GM12878 (cell line): ENCODE measurements at regions of chr1 and their contacts with region 1.

Region 1: DNA sequence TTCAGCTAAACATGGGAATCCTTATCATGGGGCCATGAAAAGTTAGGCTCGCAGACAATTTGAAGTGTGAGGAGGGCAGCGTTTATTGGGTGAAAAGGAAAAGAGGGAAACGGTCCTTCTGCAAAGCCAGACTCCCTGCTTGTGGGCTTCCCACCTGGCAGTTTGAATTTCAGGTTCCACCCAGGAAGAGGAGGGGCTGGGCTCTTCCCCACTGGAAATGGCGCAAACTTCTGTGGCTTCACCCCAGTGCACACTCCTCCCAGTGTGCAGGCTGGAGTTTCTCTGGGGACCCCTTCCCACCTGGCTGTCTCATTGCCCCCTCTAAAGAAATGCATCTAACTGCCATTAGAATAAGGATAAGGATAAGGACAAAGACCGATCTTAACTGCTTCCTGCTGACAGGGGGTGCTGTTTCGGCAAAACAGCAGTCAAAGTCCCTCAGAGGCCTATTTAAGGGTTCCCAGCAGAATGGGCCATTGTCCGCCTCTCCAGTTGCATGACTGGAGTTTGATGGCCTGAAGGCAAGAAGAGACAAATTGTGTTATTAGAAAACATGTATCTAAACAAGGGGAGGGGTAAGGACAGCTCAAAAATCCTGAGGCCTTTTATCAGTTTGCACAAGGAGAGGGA is 20.4 kb downstream of the AIM2 start:
- DNase-seq: no peak
- ATAC-seq: peak; percentile 53
- H3K4me3 ChIP-seq: no peak overlapping the region
- H3K27ac ChIP-seq: no peak overlapping the region
- H3K4me1 ChIP-seq: no peaks in the 10 kb centered on the region
- H3K27me3 ChIP-seq: no peaks in the 10 kb centered on the region
- CTCF ChIP-seq: peak in 2 of 3 experiments; percentile 22 to 29; a peak in 1 of 6 replicates
- EP300 ChIP-seq: no peak
- POLR2A ChIP-seq: 0 out of 2 replicates have a peak, but pooled peaks have one; percentile 18
- RAD21 ChIP-seq: no peak

Region 2: GRCh38 chr1:159015440-159015909 is 40.7 kb before region 1 on chr1:
- CTCF ChIA-PET with region 1: no interaction called
- POLR2A ChIA-PET with region 1: no interaction called
- RAD21 ChIA-PET with region 1: no interaction called
- SMC1A ChIA-PET with region 1: interaction called, 4 read pairs
- in situ Hi-C with region 1: loop called (anchors 5 kb)
- intact Hi-C with region 1: loop called (anchors 5 kb)
- DNase-seq: peak; percentile 84
- ATAC-seq: peak; percentile 83
- H3K4me3 ChIP-seq: peak overlapping the region; percentile 64
- H3K27ac ChIP-seq: peak overlapping the region; percentile 100
- H3K4me1 ChIP-seq: peaks cover 7% of the 10 kb centered on the region
- H3K27me3 ChIP-seq: no peaks in the 10 kb centered on the region
- CTCF ChIP-seq: no peak
- EP300 ChIP-seq: no peak
- POLR2A ChIP-seq: peak; percentile 81
- RAD21 ChIP-seq: no peak

Region 3: GRCh38 chr1:159023723-159024122 is 32.5 kb before region 1 on chr1:
- CTCF ChIA-PET with region 1: interaction called, 4 read pairs
- POLR2A ChIA-PET with region 1: no interaction called
- RAD21 ChIA-PET with region 1: no interaction called
- SMC1A ChIA-PET with region 1: interaction called, 3 read pairs
- in situ Hi-C with region 1: loop called (anchors 5 kb)
- intact Hi-C with region 1: loop called (anchors 5 kb)
- DNase-seq: no peak
- ATAC-seq: no peak
- H3K4me3 ChIP-seq: no peak overlapping the region
- H3K27ac ChIP-seq: no peak overlapping the region
- H3K4me1 ChIP-seq: no peaks in the 10 kb centered on the region; the same call in 1 of the 2 replicates
- H3K27me3 ChIP-seq: no peaks in the 10 kb centered on the region
- CTCF ChIP-seq: no peak
- EP300 ChIP-seq: no peak
- POLR2A ChIP-seq: no peak
- RAD21 ChIP-seq: no peak

Region 4: DNA sequence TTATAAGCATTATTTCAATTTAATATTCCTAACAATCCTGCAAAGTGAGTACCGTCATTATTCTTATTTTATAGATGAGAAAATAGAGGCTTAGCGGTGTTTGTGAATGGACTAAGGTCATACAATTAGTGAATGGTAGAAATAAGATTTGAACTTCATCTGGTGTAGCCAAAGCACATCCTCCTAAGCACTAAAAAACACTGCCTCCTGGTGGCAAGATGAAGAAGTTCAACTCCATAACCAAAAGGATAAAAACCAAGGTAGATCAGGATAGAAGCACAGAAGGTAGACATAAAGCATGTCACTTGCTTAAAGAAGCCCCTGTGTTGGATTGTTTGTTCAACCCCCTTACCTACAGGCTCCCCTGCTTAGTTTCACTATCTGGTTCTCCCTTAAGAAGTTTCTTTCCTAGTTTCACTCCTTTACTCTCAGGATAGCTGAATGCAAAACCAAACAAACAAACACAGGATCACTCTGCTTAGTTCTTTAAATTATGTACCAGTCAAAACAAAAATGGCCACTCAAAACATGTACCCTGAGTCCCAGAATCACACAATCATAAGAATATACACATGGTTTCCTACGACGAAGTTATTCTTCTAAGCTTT is 33.1 kb after region 1 on chr1:
- CTCF ChIA-PET with region 1: interaction called, 12 read pairs
- POLR2A ChIA-PET with region 1: no interaction called
- RAD21 ChIA-PET with region 1: interaction called, 3 read pairs
- SMC1A ChIA-PET with region 1: interaction called, 5 read pairs
- in situ Hi-C with region 1: no loop called
- intact Hi-C with region 1: no loop called
- DNase-seq: no peak
- ATAC-seq: peak; percentile 83
- H3K4me3 ChIP-seq: no peak overlapping the region
- H3K27ac ChIP-seq: no peak overlapping the region
- H3K4me1 ChIP-seq: no peaks in the 10 kb centered on the region
- H3K27me3 ChIP-seq: 0 out of 4 replicates have a peak, but pooled peaks cover 0 to 2% of the 10 kb centered on the region in 2 experiments
- CTCF ChIP-seq: peak; percentile 58 to 73 (median 71)
- EP300 ChIP-seq: no peak
- POLR2A ChIP-seq: no peak
- RAD21 ChIP-seq: peak; percentile 62